B cell (primary cell): ENCODE measurements at regions of chr7 and their contacts with region 1.

Region 1: GRCh38 chr7:86926732-86927131 is 132.7 kb downstream of the ELAPOR2 start:
- DNase-seq: peak; percentile 56
- ATAC-seq: peak; percentile 41
- H3K4me3 ChIP-seq: no peak overlapping the region
- H3K4me3 Mint-ChIP-seq: no peak overlapping the region
- H3K27ac ChIP-seq: no peak overlapping the region
- H3K27ac Mint-ChIP-seq: no peak overlapping the region
- H3K4me1 ChIP-seq: peaks cover 4 to 6% of the 10 kb centered on the region in 2 donors
- H3K4me1 Mint-ChIP-seq: peaks cover 8% of the 10 kb centered on the region
- H3K27me3 ChIP-seq: no peaks in the 10 kb centered on the region
- H3K27me3 Mint-ChIP-seq: no peaks in the 10 kb centered on the region
- CTCF ChIP-seq: peak; percentile 81

Region 2: DNA sequence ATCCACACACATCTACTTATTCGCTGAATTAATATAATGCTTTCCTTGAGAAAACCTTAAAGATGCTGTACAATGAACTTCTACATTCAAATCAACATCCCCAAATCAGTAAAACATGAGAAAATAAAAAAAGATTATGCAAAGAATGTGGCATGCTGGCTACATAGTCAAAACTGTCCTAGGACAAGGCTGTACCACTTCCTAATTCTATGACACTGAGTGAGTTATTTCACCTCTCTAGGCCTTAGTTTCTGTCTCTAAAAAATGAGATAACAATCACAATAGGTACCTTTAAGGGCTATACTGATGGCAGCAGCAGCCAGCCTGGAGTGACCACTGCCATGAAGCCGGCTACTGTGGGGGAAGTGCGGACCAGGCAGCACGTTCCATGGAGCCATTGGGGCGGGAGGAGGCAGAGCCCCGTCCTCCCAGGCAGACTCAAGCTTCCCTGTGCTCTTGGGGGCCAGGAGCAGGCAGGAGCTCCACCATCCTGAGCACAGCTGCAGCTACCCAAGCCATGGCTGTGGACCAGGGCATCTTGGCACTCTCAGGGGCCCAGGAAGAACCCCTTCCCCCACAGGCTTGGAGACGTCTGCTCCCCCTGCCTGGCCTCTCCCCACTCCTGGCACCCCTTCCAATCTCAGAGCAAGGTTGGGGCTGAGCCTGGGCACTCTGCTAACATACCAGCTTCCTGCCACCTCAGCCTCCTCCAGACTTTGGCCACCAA is 22.5 kb after region 1 on chr7:
- CTCF ChIA-PET with region 1: interaction called, 10 read pairs
- POLR2A ChIA-PET with region 1: no interaction called
- intact Hi-C with region 1: no loop called
- DNase-seq: peak; percentile 43
- ATAC-seq: peak; percentile 54
- H3K4me3 ChIP-seq: peak overlapping the region in 1 of 5 experiments; percentile 11
- H3K4me3 Mint-ChIP-seq: peak overlapping the region; percentile 66
- H3K27ac ChIP-seq: peak overlapping the region in 1 of 2 donors; percentile 67
- H3K27ac Mint-ChIP-seq: peak overlapping the region; percentile 85
- H3K4me1 ChIP-seq: peaks cover 27 to 30% of the 10 kb centered on the region in 2 donors
- H3K4me1 Mint-ChIP-seq: peaks cover 22% of the 10 kb centered on the region
- H3K27me3 ChIP-seq: no peaks in the 10 kb centered on the region
- H3K27me3 Mint-ChIP-seq: no peaks in the 10 kb centered on the region
- CTCF ChIP-seq: no peak

Region 3: GRCh38 chr7:86963599-86964230 is 37.0 kb after region 1 on chr7:
- CTCF ChIA-PET with region 1: no interaction called
- POLR2A ChIA-PET with region 1: no interaction called
- intact Hi-C with region 1: no loop called
- DNase-seq: no peak
- ATAC-seq: no peak
- H3K4me3 ChIP-seq: no peak overlapping the region
- H3K4me3 Mint-ChIP-seq: no peak overlapping the region
- H3K27ac ChIP-seq: no peak overlapping the region
- H3K27ac Mint-ChIP-seq: no peak overlapping the region
- H3K4me1 ChIP-seq: peaks cover 0 to 7% of the 10 kb centered on the region in 2 donors
- H3K4me1 Mint-ChIP-seq: peaks cover 1% of the 10 kb centered on the region
- H3K27me3 ChIP-seq: no peaks in the 10 kb centered on the region
- H3K27me3 Mint-ChIP-seq: no peaks in the 10 kb centered on the region
- CTCF ChIP-seq: no peak

Region 4: GRCh38 chr7:87231256-87231655 is 304.5 kb after region 1 on chr7:
- CTCF ChIA-PET with region 1: interaction called, 70 read pairs
- POLR2A ChIA-PET with region 1: no interaction called
- intact Hi-C with region 1: no loop called
- DNase-seq: no peak
- ATAC-seq: no peak
- H3K4me3 ChIP-seq: no peak overlapping the region
- H3K4me3 Mint-ChIP-seq: no peak overlapping the region
- H3K27ac ChIP-seq: no peak overlapping the region
- H3K27ac Mint-ChIP-seq: no peak overlapping the region
- H3K4me1 ChIP-seq: peaks cover 3 to 8% of the 10 kb centered on the region in 2 donors
- H3K4me1 Mint-ChIP-seq: peaks cover 8% of the 10 kb centered on the region
- H3K27me3 ChIP-seq: peaks cover 0 to 2% (median 0%) of the 10 kb centered on the region in 4 experiments
- H3K27me3 Mint-ChIP-seq: no peaks in the 10 kb centered on the region
- CTCF ChIP-seq: no peak